ENCODE measurements at regions of chr7 and their contacts with region 1.

Region 1: GRCh38 chr7:32204361-32205018 is 134.3 kb upstream of the PDE1C start:
- DNase-seq: peak; percentile 56 to 81 (median 77)
- H3K4me3 ChIP-seq: peak overlapping the region in 1 of 7 experiments; percentile 16
- H3K27ac ChIP-seq: no peak overlapping the region
- H3K4me1 ChIP-seq: no peaks in the 10 kb centered on the region
- H3K27me3 ChIP-seq: no peaks in the 10 kb centered on the region

Region 2: DNA sequence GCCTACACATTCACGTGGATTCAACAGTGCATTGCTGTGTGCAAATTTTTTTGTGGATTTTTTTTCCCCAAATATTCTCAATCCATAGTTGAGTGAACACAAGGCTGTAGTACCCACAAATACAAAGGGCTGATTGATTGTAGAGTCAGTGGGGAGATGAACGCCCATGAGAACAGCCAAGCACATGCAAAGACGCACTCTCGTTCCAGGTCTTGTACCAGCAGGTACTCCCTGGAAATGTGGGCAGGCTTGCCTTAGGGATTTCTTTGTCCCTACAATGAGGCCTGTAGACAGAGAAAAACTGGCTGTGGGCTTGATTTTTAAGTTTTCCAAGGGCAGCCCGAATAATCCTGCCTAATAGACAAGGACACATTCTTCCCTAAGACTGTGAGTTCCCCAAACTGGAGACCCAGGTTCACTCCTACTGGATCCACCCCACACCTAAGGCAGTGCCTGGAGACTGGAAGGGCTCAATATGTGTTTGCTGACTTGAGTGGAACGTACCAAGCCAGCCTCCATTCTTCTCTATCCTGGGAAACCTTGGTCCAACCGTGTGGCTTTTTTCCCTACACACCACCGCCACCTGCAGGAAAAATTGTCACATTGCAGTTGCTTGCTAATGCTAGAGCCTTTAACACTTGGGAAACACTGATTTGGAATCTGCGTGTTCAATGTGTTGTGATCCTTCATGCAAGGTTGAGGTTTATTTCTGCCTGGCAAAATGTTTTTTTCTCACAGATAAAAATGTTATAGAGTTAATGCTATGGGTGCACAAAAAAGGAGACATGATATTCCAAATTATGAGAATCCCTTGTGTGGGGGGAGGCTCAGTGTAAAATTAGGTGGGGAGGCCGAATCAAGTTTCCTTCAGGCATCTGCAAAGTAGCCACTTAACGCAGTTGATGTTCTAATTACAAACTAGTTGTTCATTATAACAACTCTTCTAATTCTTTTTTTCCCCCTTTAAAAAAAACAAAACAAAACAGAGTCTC is 468.2 kb before region 1 on chr7:
- CTCF ChIA-PET with region 1: interaction called, 25 read pairs
- POLR2A ChIA-PET with region 1: no interaction called
- DNase-seq: peak; percentile 23 to 56 (median 43)
- H3K4me3 ChIP-seq: no peak overlapping the region
- H3K27ac ChIP-seq: no peak overlapping the region
- H3K4me1 ChIP-seq: no peaks in the 10 kb centered on the region
- H3K27me3 ChIP-seq: peaks cover 0 to 5% (median 0%) of the 10 kb centered on the region in 5 experiments

Region 3: GRCh38 chr7:31782411-31782991 is 422.0 kb before region 1 on chr7:
- CTCF ChIA-PET with region 1: interaction called, 13 read pairs
- POLR2A ChIA-PET with region 1: no interaction called
- DNase-seq: peak; percentile 55 to 80 (median 74)
- H3K4me3 ChIP-seq: no peak overlapping the region
- H3K27ac ChIP-seq: no peak overlapping the region
- H3K4me1 ChIP-seq: no peaks in the 10 kb centered on the region
- H3K27me3 ChIP-seq: no peaks in the 10 kb centered on the region

Region 4: GRCh38 chr7:32298408-32299132 is 94.1 kb after region 1 on chr7:
- CTCF ChIA-PET with region 1: interaction called, 24 read pairs
- POLR2A ChIA-PET with region 1: no interaction called
- DNase-seq: peak in 2 of 3 donors; percentile 48 to 68
- H3K4me3 ChIP-seq: peak overlapping the region; percentile 40 to 76 (median 68)
- H3K27ac ChIP-seq: no peak overlapping the region
- H3K4me1 ChIP-seq: peaks cover 0 to 20% (median 15%) of the 10 kb centered on the region in 4 experiments
- H3K27me3 ChIP-seq: peaks cover 0 to 36% (median 9%) of the 10 kb centered on the region in 5 experiments

Region 5: DNA sequence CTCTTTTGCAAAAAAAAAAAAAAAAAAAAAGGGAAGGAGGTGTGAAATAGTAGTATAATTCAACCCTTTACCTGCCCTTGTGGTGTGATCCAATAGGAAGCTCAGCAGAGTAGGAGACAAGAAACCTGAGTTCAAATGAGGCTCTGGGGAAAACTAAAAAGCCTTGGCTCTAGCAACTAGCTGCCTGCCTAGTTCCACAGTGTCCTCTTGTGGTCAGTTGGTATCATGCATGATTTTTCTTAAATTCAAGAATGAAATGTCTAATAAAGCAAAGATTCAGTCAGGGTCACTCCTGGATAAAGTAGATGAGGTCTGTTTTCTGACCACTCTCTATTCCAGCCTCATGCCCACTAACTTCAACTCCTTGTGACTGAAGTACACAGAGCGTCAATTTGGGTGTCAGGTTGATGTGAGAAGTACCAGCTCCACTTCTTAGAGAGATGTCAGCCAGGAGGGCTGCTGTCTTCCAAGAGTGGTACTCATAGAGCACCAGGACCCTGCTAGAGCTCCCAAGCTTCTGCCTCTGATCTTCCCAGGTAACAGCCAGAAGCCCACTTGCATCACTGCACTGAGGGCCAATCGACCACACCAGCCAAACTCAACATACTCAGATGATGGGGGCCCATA is 275.2 kb after region 1 on chr7:
- CTCF ChIA-PET with region 1: interaction called, 26 read pairs
- POLR2A ChIA-PET with region 1: interaction called, 3 read pairs
- DNase-seq: peak; percentile 36 to 64 (median 59)
- H3K4me3 ChIP-seq: no peak overlapping the region
- H3K27ac ChIP-seq: no peak overlapping the region
- H3K4me1 ChIP-seq: peaks cover 0 to 9% (median 2%) of the 10 kb centered on the region in 4 experiments
- H3K27me3 ChIP-seq: peaks cover 0 to 3% (median 0%) of the 10 kb centered on the region in 5 experiments

Measured in common myeloid progenitor, CD34-positive (primary cell).